CD4-positive, alpha-beta memory T cell (primary cell): ENCODE measurements at regions of chr1 and their contacts with region 1.

Region 1: DNA sequence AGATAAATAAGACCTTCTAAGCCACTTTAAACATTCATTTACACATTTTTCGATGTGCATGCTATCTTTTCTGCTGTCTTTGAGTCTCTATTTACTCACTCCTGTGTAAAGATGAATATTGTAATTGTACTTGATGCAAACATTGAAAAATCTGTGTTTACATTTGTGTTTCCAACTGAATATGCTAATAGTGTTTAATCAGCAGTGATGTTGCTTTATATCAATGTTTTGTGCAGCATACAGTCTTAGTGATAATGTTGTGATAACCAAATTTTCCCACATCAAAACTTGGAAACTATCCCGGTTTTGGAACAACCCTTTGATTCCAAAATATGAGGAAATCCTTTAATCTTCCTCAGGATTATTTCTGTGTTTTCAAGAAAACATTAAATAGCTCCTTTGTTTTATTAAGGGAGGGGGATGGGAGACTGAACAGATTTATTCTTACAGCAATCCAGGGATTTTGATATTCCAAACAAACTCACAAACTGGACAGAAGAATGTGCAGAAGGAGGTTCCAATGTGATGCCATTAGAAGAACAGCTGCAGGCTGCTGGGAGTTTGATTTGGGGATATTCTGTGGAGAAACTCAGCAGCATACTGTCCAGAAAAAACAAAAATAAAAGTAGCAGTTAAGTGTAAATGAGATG is 248.0 kb downstream of the S1PR1 start:
- DNase-seq: no peak
- H3K4me3 ChIP-seq: no peak overlapping the region
- H3K4me3 Mint-ChIP-seq: no peak overlapping the region
- H3K27ac ChIP-seq: no peak overlapping the region
- H3K27ac Mint-ChIP-seq: no peak overlapping the region
- H3K4me1 ChIP-seq: no peaks in the 10 kb centered on the region
- H3K4me1 Mint-ChIP-seq: no peaks in the 10 kb centered on the region
- H3K27me3 ChIP-seq: no peaks in the 10 kb centered on the region
- H3K27me3 Mint-ChIP-seq: peaks cover 0 to 1% of the 10 kb centered on the region in 2 donors

Region 2: DNA sequence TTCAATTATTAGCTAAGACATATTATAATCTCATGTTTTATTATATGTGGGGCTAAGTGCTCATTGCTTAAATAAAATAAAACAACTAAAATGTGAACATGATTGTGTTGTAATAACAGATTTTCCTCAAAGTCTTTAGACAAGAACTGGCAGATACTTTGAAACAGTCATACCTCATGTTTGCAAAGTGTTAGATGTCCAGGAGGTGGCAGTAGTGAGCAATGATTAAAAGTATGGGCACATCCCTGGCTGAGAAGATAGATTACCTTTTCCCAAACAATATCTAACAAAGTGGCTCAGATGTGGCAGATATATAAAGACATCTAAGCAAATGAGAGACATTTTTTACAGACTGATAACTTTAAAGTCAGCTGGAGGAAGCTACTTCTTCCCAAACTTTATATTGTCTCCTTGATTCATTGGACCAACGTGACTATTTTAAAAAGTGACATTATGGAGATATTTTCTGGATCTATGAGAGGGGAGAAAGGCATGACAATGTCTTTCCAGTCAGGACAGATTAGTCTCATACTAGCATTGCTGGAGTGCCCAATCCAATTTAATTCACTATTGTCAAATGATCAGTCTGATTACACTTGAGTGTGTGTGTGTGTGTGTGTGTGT is 21.8 kb after region 1 on chr1:
- CTCF ChIA-PET with region 1: interaction called, 12 read pairs
- POLR2A ChIA-PET with region 1: no interaction called
- intact Hi-C with region 1: no loop called
- DNase-seq: peak; percentile 25 to 48 (median 37)
- H3K4me3 ChIP-seq: no peak overlapping the region
- H3K4me3 Mint-ChIP-seq: no peak overlapping the region
- H3K27ac ChIP-seq: no peak overlapping the region
- H3K27ac Mint-ChIP-seq: no peak overlapping the region
- H3K4me1 ChIP-seq: no peaks in the 10 kb centered on the region
- H3K4me1 Mint-ChIP-seq: peaks cover 0 to 2% (median 0%) of the 10 kb centered on the region in 4 donors
- H3K27me3 ChIP-seq: no peaks in the 10 kb centered on the region
- H3K27me3 Mint-ChIP-seq: no peaks in the 10 kb centered on the region